Natural killer cell (primary cell): ENCODE measurements at regions of chr16 and their contacts with region 1.

Region 1: GRCh38 chr16:86519649-86520316 is 9.5 kb downstream of the FOXF1 start:
- DNase-seq: peak; percentile 51 to 80
- ATAC-seq: peak; percentile 77 to 91 (median 84)
- H3K4me3 ChIP-seq: no peak overlapping the region
- H3K4me3 Mint-ChIP-seq: no peak overlapping the region
- H3K27ac ChIP-seq: no peak overlapping the region
- H3K27ac Mint-ChIP-seq: peak overlapping the region in 1 of 2 donors; percentile 47
- H3K4me1 ChIP-seq: peaks cover 11% of the 10 kb centered on the region
- H3K4me1 Mint-ChIP-seq: peaks cover 0 to 8% of the 10 kb centered on the region in 2 donors
- H3K27me3 ChIP-seq: peaks cover 32% of the 10 kb centered on the region
- H3K27me3 Mint-ChIP-seq: peaks cover 40 to 55% of the 10 kb centered on the region in 2 donors
- CTCF ChIP-seq: peak; percentile 92

Region 2: DNA sequence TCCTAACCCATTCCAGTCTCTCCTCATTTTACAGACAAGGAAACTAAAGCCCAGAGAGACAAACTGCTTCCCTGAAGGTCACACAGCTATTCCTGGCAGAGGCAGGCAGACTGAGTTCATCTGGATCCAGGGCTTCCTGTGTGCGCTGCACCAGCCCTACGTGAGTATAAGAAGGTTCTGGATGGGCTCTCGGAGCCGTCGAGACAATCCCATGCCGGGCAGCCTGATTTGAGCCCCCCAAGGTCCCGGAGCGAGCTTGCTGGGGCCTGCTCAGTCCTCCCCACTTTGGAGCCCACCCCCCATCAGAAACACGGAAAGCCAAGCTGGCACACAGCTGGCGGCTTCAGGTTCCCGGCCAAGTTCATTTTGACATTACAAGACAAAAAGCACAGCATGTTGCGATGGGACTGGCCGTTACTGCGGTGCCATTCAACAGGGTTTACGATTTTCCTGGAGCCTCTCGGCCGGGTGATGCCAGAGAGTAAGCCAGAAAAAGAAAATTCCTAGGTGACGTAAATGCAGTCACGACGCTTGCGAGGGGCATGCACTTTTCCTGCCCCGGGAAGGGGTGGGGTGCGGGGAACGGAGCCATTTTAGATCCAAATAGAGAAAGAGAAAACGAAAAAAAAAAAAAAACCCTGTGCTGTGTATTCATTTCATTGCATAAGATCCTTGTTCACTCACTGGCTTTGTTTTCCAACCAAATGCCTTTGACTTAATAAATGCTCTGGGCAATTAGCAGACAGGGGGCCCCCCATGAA is 176.6 kb before region 1 on chr16:
- intact Hi-C with region 1: loop called (anchors 2 kb)
- DNase-seq: no peak
- ATAC-seq: no peak
- H3K4me3 ChIP-seq: no peak overlapping the region
- H3K4me3 Mint-ChIP-seq: no peak overlapping the region
- H3K27ac ChIP-seq: no peak overlapping the region
- H3K27ac Mint-ChIP-seq: no peak overlapping the region
- H3K4me1 ChIP-seq: no peaks in the 10 kb centered on the region
- H3K4me1 Mint-ChIP-seq: no peaks in the 10 kb centered on the region
- H3K27me3 ChIP-seq: no peaks in the 10 kb centered on the region
- H3K27me3 Mint-ChIP-seq: peaks cover 38 to 81% of the 10 kb centered on the region in 2 donors
- CTCF ChIP-seq: no peak

Region 3: GRCh38 chr16:86531191-86531545 is 11.4 kb after region 1 on chr16:
- intact Hi-C with region 1: no loop called
- DNase-seq: no peak
- ATAC-seq: no peak
- H3K4me3 ChIP-seq: no peak overlapping the region
- H3K4me3 Mint-ChIP-seq: no peak overlapping the region
- H3K27ac ChIP-seq: no peak overlapping the region
- H3K27ac Mint-ChIP-seq: no peak overlapping the region
- H3K4me1 ChIP-seq: no peaks in the 10 kb centered on the region
- H3K4me1 Mint-ChIP-seq: no peaks in the 10 kb centered on the region
- H3K27me3 ChIP-seq: no peaks in the 10 kb centered on the region
- H3K27me3 Mint-ChIP-seq: no peaks in the 10 kb centered on the region
- CTCF ChIP-seq: no peak